ENCODE measurements at regions of chr6 and their contacts with region 1.

Region 1: DNA sequence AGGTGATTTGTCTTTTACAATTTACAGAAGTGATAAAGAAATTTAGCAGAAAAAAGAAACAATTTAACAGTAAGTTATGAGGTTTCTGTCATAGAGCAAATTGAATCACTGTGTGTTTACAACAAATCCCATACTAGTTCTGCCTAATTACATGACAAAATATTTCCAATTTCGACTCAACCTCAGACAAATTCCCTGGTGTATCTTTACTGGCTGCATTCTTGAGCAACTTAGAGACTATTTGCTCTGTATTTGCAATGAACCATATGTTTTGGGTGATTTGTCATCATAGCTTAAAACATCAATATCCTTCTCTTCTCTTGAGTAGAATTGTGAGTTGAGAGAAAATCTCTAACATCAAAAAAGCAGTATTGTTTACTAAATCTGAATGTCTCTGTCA is 128.7 kb downstream of the SIM1 start:
- DNase-seq: no peak
- H3K4me3 ChIP-seq: no peak overlapping the region
- H3K27ac ChIP-seq: no peak overlapping the region
- H3K4me1 ChIP-seq: no peaks in the 10 kb centered on the region
- H3K27me3 ChIP-seq: no peaks in the 10 kb centered on the region
- CTCF ChIP-seq: no peak
- POLR2A ChIP-seq: no peak

Region 2: DNA sequence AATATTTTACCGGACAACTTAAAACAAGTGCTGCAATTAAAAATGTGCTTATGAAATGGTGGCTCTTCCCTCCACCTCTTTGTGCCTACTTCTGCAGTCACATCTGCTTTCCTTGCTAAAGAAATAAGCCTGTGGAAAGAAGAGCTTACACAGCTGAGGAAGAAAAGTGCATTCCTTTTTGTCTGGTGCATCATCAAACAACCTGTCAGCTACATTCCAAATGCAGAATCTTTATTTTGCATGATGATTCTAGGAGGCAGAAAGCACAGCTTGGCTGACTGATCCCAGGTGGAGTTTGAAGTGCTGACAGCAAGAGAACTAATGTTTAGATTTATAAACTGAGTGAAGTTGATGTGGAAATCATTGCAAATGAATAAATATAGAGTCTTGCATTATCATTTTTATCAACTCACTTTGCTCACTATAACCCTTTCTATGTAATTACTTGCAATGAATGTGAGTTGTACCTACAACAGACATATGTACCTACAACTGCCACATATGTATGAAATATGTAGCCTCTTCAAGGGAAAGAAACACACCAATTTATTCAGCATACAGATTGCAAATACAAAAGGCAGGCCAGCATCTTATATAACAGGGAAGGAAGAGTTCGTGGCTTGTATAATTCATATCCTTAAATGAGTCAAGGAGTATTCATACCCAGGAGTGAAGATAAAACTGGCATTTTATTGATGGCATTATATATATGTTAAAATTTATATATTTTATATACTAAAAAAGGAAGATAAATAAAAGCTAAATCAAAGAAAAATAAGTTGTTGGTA is 118.6 kb before region 1 on chr6:
- intact Hi-C with region 1: loop called (anchors 5 kb)
- DNase-seq: no peak
- H3K4me3 ChIP-seq: no peak overlapping the region
- H3K27ac ChIP-seq: no peak overlapping the region
- H3K4me1 ChIP-seq: no peaks in the 10 kb centered on the region
- H3K27me3 ChIP-seq: no peaks in the 10 kb centered on the region
- CTCF ChIP-seq: no peak
- POLR2A ChIP-seq: no peak

Region 3: GRCh38 chr6:100289285-100289684 is 46.7 kb before region 1 on chr6:
- intact Hi-C with region 1: no loop called
- DNase-seq: no peak
- H3K4me3 ChIP-seq: no peak overlapping the region
- H3K27ac ChIP-seq: no peak overlapping the region
- H3K4me1 ChIP-seq: no peaks in the 10 kb centered on the region
- H3K27me3 ChIP-seq: no peaks in the 10 kb centered on the region
- CTCF ChIP-seq: no peak
- POLR2A ChIP-seq: no peak

Measured in breast epithelium (tissue), 4 donors.